Activated T-helper 1 cell treated with anti-CD3 and anti-CD28 coated beads, Interleukin-12 subunit alpha, Interleukin-12 subunit beta, Interleukin-2, Interleukin-4 antibody, amounts not matched to agents 30 ng/mL and 10 ng/mL and 1 ng/mL, durations not matched to agents 14 hours and 24 hours and 36 hours (primary cell): ENCODE measurements at regions of chr6 and their contacts with region 1.

Region 1: GRCh38 chr6:157099912-157100593 is 223.3 kb downstream of the TMEM242 start:
- DNase-seq: peak; percentile 58
- H3K4me3 Mint-ChIP-seq: peak overlapping the region; percentile 63
- H3K27ac Mint-ChIP-seq: peak overlapping the region; percentile 86
- H3K4me1 Mint-ChIP-seq: peaks cover 57% of the 10 kb centered on the region
- H3K27me3 Mint-ChIP-seq: no peaks in the 10 kb centered on the region

Region 2: DNA sequence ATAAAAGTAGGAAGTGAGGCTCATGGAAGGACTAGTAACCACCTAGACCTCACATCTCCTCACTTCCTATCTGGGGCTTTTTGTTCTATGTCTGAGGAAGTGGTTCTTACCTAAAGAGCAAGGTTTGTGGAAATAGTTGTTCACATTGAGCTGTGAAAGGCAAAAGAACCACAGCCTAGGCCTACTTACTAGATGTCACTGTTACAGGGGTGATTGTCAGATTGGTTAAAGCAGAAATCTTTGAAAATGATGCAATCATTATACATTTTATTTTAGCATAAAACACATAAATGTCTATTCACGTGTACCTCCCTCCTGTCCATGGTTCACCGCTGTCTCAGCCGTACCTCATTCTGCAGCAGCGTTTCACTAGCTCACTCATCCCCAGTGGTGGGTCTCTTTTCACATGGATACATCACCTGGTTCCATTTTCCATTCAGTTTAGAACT is 45.5 kb before region 1 on chr6:
- intact Hi-C with region 1: loop called (anchors 1 kb)
- DNase-seq: peak; percentile 35
- H3K4me3 Mint-ChIP-seq: peak overlapping the region; percentile 53
- H3K27ac Mint-ChIP-seq: peak overlapping the region; percentile 95
- H3K4me1 Mint-ChIP-seq: peaks cover 33% of the 10 kb centered on the region
- H3K27me3 Mint-ChIP-seq: no peaks in the 10 kb centered on the region

Region 3: DNA sequence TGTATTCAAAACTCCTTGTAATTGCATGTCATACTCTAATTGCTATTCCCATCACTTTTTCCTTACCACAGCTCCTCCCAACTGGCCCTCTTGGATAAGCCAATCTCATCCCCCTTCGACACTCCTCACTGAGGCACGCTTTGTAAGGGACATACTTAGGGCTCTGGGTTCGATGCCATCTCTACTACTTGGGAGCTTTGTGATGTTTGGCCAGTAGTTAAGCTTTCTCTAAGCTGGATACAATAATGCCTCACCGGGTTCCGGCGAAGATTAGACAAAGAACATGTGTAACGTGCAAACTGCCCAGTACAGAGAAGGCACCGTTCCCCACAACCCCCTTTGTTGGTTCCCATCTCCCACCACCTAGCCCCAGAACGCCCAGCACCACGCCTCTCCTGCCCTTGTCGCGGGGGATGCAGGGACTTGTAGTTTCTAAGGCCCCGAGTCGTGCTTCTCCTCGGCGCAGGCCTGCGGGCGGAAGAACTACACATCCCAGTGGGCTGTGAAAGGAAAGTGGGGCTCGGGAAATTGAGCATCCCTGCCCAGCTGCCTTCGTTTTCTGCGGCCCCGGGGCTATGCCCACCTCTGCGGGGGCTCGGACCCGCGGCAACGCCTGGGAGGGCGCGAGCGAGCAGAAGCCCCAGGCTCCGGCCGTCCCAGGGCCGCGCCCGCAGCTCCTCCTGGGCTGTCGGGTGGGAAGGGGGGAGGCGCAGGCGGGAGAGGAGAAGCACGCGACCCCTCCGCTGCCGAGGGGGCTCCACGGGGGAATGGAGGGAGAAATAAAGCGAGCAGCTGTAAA is 279.8 kb after region 1 on chr6:
- intact Hi-C with region 1: no loop called
- DNase-seq: peak; percentile 86
- H3K4me3 Mint-ChIP-seq: peak overlapping the region; percentile 88
- H3K27ac Mint-ChIP-seq: peak overlapping the region; percentile 83
- H3K4me1 Mint-ChIP-seq: peaks cover 39% of the 10 kb centered on the region
- H3K27me3 Mint-ChIP-seq: peaks cover 6% of the 10 kb centered on the region